Activated T-helper 2 cell treated with anti-CD3 and anti-CD28 coated beads, Interferon-gamma antibody, Interleukin-2, Interleukin-4, amounts not matched to agents 10 μg/mL and 5 μg/mL and 100 μg/mL, durations not matched to agents 14 hours and 24 hours and 36 hours (primary cell): ENCODE measurements at regions of chrX and their contacts with region 1.

Region 1: GRCh38 chrX:21839334-21840192 is at the start of gene MBTPS2:
- DNase-seq: peak; percentile 78
- H3K4me3 Mint-ChIP-seq: peak within 1 kb of the TSS; percentile 87
- H3K27ac Mint-ChIP-seq: peak within 1 kb of the TSS; percentile 85
- H3K4me1 Mint-ChIP-seq: peaks cover 6% of the 10 kb centered on the region
- H3K27me3 Mint-ChIP-seq: no peaks in the 10 kb centered on the region
- total RNA-seq, gene MBTPS2: 9.8 and 10.4 TPM in 2 replicates

Region 2: DNA sequence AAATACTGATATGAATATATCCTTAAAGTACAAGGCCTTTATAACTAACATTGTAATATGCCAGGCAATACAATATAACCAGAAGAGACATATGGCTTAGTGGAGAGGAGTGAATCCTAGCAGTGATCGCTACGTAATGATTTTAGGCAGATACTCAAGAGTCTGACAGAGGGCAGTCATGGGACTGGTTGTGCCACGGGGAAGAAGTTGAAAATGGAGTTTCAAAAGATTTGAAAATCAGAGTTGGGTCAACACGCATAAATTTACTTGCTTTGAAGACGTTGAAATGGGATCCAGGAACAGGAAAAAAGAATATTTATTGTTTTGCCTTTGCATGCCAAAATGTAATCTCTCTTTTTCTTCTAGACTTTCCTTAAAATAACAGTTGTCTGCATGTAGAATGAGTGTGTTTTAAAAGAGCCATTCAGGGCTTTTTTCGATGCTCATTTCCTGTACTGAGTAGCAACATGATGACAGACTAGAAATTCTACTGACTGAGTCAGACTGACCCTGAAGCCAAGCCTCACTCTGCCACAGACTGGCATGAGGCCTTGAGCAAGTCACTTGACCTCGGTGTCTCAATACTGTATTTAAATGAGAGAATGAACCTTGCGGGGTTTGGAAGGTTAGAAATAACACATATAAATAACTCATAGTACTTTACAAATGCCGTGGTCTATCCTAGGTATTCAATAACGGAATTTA is 92.9 kb after region 1 on chrX:
- intact Hi-C with region 1: loop called (anchors 5 kb)
- DNase-seq: no peak
- H3K4me3 Mint-ChIP-seq: no peak overlapping the region
- H3K27ac Mint-ChIP-seq: peak overlapping the region; percentile 62
- H3K4me1 Mint-ChIP-seq: peaks cover 31% of the 10 kb centered on the region
- H3K27me3 Mint-ChIP-seq: no peaks in the 10 kb centered on the region

Region 3: GRCh38 chrX:21940356-21940829 is 100.8 kb after region 1 on chrX and contains the start of gene SMS:
- intact Hi-C with region 1: loop called (anchors 1 kb)
- DNase-seq: peak; percentile 24
- H3K4me3 Mint-ChIP-seq: peak within 1 kb of the TSS; percentile 87
- H3K27ac Mint-ChIP-seq: peak within 1 kb of the TSS; percentile 93
- H3K4me1 Mint-ChIP-seq: peaks cover 31% of the 10 kb centered on the region
- H3K27me3 Mint-ChIP-seq: no peaks in the 10 kb centered on the region
- total RNA-seq, gene SMS: 143 TPM in 2 replicates

Region 4: GRCh38 chrX:21972721-21973120 is 133.2 kb after region 1 on chrX:
- intact Hi-C with region 1: loop called (anchors 1 kb)
- DNase-seq: peak; percentile 13
- H3K4me3 Mint-ChIP-seq: no peak overlapping the region
- H3K27ac Mint-ChIP-seq: peak overlapping the region; percentile 82
- H3K4me1 Mint-ChIP-seq: peaks cover 35% of the 10 kb centered on the region
- H3K27me3 Mint-ChIP-seq: no peaks in the 10 kb centered on the region

Region 5: GRCh38 chrX:22192417-22193060 is 353.0 kb after region 1 on chrX:
- intact Hi-C with region 1: loop called (anchors 5 kb)
- DNase-seq: peak; percentile 21
- H3K4me3 Mint-ChIP-seq: no peak overlapping the region
- H3K27ac Mint-ChIP-seq: no peak overlapping the region
- H3K4me1 Mint-ChIP-seq: peaks cover 8% of the 10 kb centered on the region
- H3K27me3 Mint-ChIP-seq: no peaks in the 10 kb centered on the region